ENCODE measurements at regions of chr12 and their contacts with region 1.

Region 1: GRCh38 chr12:119594772-119595445 is 1.3 kb downstream of the TMEM233 start:
- DNase-seq: peak; percentile 81 to 95
- ATAC-seq: peak; percentile 82 to 88 (median 86)
- H3K4me3 ChIP-seq: peak overlapping the region; percentile 85
- H3K27ac ChIP-seq: peak overlapping the region; percentile 93
- H3K4me1 ChIP-seq: peaks cover 27% of the 10 kb centered on the region
- H3K27me3 ChIP-seq: no peaks in the 10 kb centered on the region
- CTCF ChIP-seq: no peak

Region 2: DNA sequence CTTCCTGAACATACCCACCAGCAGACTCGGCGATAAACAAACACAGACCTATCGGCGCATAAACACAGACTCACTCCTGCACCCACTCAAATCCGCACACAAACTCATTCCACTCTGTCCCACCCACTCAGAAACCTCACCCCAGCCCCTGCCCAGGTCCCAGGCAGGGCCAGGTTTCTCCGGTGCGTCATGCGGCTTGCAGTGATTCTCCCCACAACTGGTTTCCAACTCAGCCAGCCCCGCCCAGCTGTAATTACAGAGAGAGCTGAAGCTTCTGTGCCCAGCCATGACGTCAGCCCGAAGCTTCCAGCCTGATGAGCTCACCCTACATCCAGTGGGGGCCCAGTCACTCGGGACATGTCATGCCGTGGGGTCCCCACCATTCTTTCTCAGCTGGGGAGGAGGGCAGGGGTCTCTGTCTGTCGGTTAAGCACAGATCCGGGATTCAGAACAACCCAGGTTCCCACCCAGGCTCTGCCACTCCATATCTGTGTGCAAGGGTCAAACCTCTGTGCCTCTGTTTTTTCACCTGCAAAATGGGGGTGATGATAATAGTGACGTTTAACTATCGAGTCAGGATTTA is 418.6 kb before region 1 on chr12:
- intact Hi-C with region 1: loop called in 1 of 2 experiments (anchors 10 kb)
- DNase-seq: peak; percentile 92 to 98
- ATAC-seq: peak; percentile 61 to 64 (median 63)
- H3K4me3 ChIP-seq: peak overlapping the region; percentile 58
- H3K27ac ChIP-seq: peak overlapping the region; percentile 96
- H3K4me1 ChIP-seq: peaks cover 25% of the 10 kb centered on the region
- H3K27me3 ChIP-seq: no peaks in the 10 kb centered on the region
- CTCF ChIP-seq: no peak

Region 3: DNA sequence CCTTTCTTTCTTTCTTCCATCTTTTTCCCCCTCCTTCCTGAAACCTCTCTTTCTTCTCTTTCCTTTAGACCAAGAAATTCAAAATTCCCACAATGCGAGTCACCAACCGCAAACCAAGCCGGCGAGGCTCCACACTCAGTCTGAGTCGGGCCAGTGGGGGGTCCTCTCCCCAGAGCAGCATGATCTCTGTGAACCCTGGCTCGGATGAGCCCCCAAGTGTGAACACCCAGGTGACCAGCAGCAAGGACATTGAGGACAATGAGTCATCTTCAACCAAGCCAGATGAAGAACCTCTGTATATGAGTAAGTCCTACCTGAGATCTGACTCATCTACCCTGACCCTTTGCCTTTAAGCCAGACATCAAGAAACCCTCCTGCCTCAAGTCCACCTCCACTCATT is 89.9 kb before region 1 on chr12:
- intact Hi-C with region 1: no loop called
- DNase-seq: no peak
- ATAC-seq: no peak
- H3K4me3 ChIP-seq: no peak overlapping the region
- H3K27ac ChIP-seq: no peak overlapping the region
- H3K4me1 ChIP-seq: no peaks in the 10 kb centered on the region
- H3K27me3 ChIP-seq: peaks cover 0 to 6% (median 0%) of the 10 kb centered on the region in 3 donors
- CTCF ChIP-seq: no peak

Region 4: GRCh38 chr12:119649202-119649808 is 54.4 kb after region 1 on chr12:
- intact Hi-C with region 1: loop called (anchors 5 kb)
- DNase-seq: no peak
- ATAC-seq: no peak
- H3K4me3 ChIP-seq: no peak overlapping the region
- H3K27ac ChIP-seq: no peak overlapping the region
- H3K4me1 ChIP-seq: peaks cover 6% of the 10 kb centered on the region
- H3K27me3 ChIP-seq: no peaks in the 10 kb centered on the region
- CTCF ChIP-seq: peak; percentile 80

Region 5: DNA sequence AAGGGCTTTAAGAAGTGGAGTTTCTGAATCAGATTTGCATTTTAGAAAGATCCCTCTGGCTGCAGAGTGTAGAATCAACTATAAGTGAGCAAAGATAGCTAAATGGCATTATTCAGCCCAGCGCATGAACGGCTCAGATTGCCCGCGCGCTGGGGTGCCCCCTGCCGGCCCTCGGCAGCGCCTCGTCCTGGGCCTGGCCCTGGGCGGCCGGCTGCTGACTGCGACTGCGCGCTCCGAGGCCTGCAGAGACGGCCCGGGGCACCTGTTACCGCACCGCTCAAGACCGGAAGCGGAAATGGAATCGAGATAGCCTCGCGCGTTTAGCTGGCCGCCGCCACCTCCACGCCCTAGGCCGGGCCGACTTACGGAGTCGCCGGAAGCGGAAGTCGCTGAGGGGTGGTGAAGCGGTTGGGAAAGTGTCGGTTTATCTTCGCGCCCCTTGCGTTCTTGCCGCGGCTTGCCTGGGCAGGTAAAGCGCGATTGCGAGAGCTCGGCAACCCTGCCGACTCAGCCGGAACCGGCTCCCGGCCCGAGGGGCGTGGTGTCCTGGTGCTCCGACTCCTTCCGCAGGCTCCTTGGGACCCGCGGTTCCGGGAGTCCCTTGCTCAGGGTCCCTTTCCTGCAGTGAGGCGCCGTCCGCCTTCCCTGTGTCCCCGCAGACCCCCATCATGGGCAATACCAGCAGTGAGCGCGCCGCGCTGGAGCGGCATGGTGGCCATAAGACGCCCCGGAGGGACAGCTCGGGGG is 72.8 kb after region 1 on chr12 and contains the start of gene PRKAB1:
- intact Hi-C with region 1: loop called in 1 of 2 experiments (anchors 5 kb)
- DNase-seq: peak; percentile 97 to 98
- ATAC-seq: peak; percentile 98 to 100 (median 99)
- H3K4me3 ChIP-seq: peak within 1 kb of the TSS; percentile 94
- H3K27ac ChIP-seq: peak within 1 kb of the TSS; percentile 96
- H3K4me1 ChIP-seq: peaks cover 19% of the 10 kb centered on the region
- H3K27me3 ChIP-seq: no peaks in the 10 kb centered on the region
- CTCF ChIP-seq: peak; percentile 89
- total RNA-seq, gene PRKAB1: 9.0 to 16.7 (median 10.9) TPM

Region 6: DNA sequence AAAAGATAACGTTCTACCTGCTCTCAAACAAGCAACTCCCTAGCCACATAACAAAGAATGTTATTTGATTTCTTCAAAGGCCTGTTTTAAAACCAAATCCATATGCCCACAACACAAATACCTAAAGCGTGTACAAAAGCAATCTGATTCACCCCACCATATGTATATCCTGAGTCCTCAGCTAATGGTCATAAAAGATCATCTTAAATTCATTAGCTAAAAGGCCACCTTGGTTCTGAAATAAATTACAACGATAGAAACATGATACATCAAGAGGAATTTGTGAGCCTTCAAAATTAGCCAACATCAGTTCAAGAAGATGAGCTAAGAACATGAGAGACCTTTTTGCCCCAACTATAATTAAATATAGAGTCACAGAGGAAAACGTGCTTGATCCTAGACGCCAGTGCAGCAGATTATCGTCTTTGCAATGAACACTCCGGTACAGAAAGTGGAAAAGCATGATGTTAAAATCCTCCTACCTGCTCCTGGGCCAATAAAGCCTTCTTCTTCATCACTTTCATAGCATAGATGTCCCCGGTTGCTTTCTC is 262.2 kb after region 1 on chr12:
- intact Hi-C with region 1: no loop called
- DNase-seq: no peak
- ATAC-seq: no peak
- H3K4me3 ChIP-seq: no peak overlapping the region
- H3K27ac ChIP-seq: no peak overlapping the region
- H3K4me1 ChIP-seq: no peaks in the 10 kb centered on the region
- H3K27me3 ChIP-seq: no peaks in the 10 kb centered on the region
- CTCF ChIP-seq: no peak

Region 7: GRCh38 chr12:120314220-120314619 is 719.3 kb after region 1 on chr12:
- intact Hi-C with region 1: no loop called
- DNase-seq: no peak
- ATAC-seq: no peak
- H3K4me3 ChIP-seq: no peak overlapping the region
- H3K27ac ChIP-seq: no peak overlapping the region
- H3K4me1 ChIP-seq: peaks cover 7% of the 10 kb centered on the region
- H3K27me3 ChIP-seq: no peaks in the 10 kb centered on the region
- CTCF ChIP-seq: no peak

Region 8: GRCh38 chr12:120628919-120629318 is 1034.0 kb after region 1 on chr12:
- intact Hi-C with region 1: no loop called
- DNase-seq: no peak
- ATAC-seq: peak in 1 of 4 donors; percentile 40
- H3K4me3 ChIP-seq: no peak overlapping the region
- H3K27ac ChIP-seq: no peak overlapping the region
- H3K4me1 ChIP-seq: no peaks in the 10 kb centered on the region
- H3K27me3 ChIP-seq: no peaks in the 10 kb centered on the region
- CTCF ChIP-seq: no peak